Prostate gland (tissue), 2 donors: ENCODE measurements at regions of chr11 and their contacts with region 1.

Region 1: GRCh38 chr11:130131961-130132850 is 27.4 kb upstream of the ST14 start:
- DNase-seq: peak; percentile 46
- H3K4me3 ChIP-seq: no peak overlapping the region
- H3K27ac ChIP-seq: no peak overlapping the region
- H3K4me1 ChIP-seq: no peaks in the 10 kb centered on the region
- H3K27me3 ChIP-seq: no peaks in the 10 kb centered on the region
- CTCF ChIP-seq: peak; percentile 52 to 87 (median 78)
- POLR2A ChIP-seq: no peak

Region 2: GRCh38 chr11:129922674-129923073 is 209.5 kb before region 1 on chr11:
- intact Hi-C with region 1: loop called (anchors 2 kb)
- DNase-seq: no peak
- H3K4me3 ChIP-seq: no peak overlapping the region
- H3K27ac ChIP-seq: no peak overlapping the region
- H3K4me1 ChIP-seq: no peaks in the 10 kb centered on the region
- H3K27me3 ChIP-seq: no peaks in the 10 kb centered on the region
- CTCF ChIP-seq: no peak
- POLR2A ChIP-seq: no peak

Region 3: GRCh38 chr11:130022798-130023583 is 109.2 kb before region 1 on chr11:
- intact Hi-C with region 1: no loop called
- DNase-seq: no peak
- H3K4me3 ChIP-seq: no peak overlapping the region
- H3K27ac ChIP-seq: no peak overlapping the region
- H3K4me1 ChIP-seq: no peaks in the 10 kb centered on the region
- H3K27me3 ChIP-seq: no peaks in the 10 kb centered on the region
- CTCF ChIP-seq: no peak
- POLR2A ChIP-seq: no peak